Activated CD8-positive, alpha-beta T cell treated with anti-CD3 and anti-CD28 coated beads for 36 hours (primary cell): ENCODE measurements at regions of chr17 and their contacts with region 1.

Region 1: DNA sequence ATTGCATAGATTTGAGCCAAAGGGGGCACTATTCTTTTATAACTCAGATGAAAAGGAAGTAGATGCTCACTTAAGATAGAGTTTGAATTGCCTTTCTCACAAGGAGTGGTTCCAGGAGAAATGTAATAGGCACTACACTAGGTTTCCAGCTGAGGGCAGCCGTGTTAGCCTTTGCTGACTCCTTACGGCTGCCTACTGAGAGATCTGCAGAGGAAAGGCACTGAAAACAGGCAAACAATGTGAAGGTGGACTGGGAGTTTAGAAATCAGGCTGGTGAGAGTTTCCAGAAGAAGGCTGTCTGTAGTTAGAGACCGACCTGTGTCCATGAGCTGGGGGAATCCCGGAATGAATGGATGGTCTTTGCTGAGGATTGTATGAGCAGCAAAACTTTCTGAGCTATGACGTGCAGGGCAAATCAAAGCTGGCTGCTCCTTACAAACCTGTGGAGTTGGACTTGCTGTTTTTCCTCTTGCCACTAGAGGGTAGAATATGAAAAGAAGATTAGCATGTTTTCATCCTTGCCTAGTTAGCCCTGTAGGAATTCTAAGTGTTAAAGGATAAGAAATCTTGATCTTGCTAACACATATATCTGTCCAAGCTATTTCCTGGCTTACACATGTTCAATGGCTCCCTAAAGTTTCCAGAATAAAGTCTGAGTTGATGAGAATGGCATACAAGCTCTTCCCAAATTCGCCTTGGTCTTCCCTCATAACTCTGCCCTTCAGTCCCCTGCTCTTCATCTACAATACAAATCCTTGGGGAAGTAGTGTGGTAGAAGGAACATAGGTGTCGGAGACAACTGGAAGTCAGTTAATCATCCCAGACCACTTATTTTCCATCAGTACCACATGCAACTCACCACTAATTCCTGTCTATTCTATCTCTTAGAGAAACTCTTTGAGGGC is 20.1 kb upstream of the TAOK1 start:
- DNase-seq: peak; percentile 57
- ATAC-seq: peak; percentile 95
- H3K4me3 Mint-ChIP-seq: no peak overlapping the region
- H3K27ac Mint-ChIP-seq: no peak overlapping the region
- H3K4me1 Mint-ChIP-seq: no peaks in the 10 kb centered on the region
- H3K27me3 Mint-ChIP-seq: no peaks in the 10 kb centered on the region
- CTCF ChIP-seq: peak; percentile 82

Region 2: DNA sequence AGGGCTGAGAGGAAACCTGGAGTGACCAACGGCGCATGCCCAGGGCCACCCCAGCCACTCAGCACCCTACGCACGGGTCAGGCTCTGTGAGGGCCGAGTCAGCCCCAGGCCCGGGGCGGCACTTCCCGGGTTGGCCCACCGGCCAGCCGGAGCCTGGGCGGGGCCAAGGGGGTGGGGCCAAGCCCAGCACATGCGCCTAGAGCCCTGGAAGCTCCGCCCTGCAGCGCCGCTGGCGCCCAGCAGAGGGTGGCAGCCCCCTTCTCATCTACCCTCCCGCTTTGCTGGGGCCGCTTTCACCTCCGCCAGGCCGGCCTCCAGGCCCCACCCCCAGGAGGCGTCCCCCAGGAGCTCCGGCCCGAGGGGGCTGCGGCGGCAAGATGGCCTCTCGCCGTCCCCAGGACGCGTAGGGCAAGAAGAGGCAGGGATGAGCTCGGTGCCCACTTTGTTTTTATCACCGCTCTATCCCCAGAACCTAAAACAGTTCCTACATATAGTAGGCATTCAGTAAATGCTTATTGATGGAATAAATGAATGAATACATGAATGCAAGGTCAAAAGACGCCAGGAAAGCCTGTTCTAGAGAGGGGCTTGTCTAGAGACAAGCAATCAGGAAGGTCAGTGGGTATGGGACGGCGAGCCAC is 221.2 kb before region 1 on chr17:
- CTCF ChIA-PET with region 1: interaction called, 10 read pairs
- POLR2A ChIA-PET with region 1: no interaction called
- intact Hi-C with region 1: no loop called
- DNase-seq: peak; percentile 97
- ATAC-seq: peak; percentile 97
- H3K4me3 Mint-ChIP-seq: peak overlapping the region; percentile 72
- H3K27ac Mint-ChIP-seq: peak overlapping the region; percentile 87
- H3K4me1 Mint-ChIP-seq: peaks cover 54% of the 10 kb centered on the region
- H3K27me3 Mint-ChIP-seq: no peaks in the 10 kb centered on the region
- CTCF ChIP-seq: peak; percentile 93

Region 3: GRCh38 chr17:29384900-29385299 is 14.8 kb after region 1 on chr17:
- CTCF ChIA-PET with region 1: interaction called, 26 read pairs
- POLR2A ChIA-PET with region 1: interaction called, 4 read pairs
- intact Hi-C with region 1: no loop called
- DNase-seq: no peak
- ATAC-seq: no peak
- H3K4me3 Mint-ChIP-seq: no peak overlapping the region
- H3K27ac Mint-ChIP-seq: no peak overlapping the region
- H3K4me1 Mint-ChIP-seq: peaks cover 4% of the 10 kb centered on the region
- H3K27me3 Mint-ChIP-seq: no peaks in the 10 kb centered on the region
- CTCF ChIP-seq: no peak

Region 4: DNA sequence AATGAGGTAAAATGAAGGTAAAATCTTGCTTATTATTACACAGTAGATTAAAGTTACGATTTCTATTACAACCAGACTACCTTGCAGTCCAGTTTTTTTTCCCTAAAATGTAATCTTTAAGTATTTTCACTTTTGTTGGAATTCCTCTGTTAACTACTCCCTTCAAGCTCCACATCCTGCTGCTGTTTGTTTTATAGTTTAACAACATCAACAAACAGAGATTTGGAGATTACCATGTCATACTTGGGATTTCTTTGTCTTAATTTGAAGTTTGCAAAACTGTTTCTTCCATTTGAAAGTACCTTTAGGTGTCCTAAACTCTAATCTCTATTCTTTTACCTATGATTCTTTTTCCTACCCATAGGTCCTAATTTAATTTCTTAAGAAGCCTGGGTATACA is 113.4 kb after region 1 on chr17:
- CTCF ChIA-PET with region 1: interaction called, 14 read pairs
- POLR2A ChIA-PET with region 1: no interaction called
- intact Hi-C with region 1: no loop called
- DNase-seq: no peak
- ATAC-seq: no peak
- H3K4me3 Mint-ChIP-seq: no peak overlapping the region
- H3K27ac Mint-ChIP-seq: no peak overlapping the region
- H3K4me1 Mint-ChIP-seq: no peaks in the 10 kb centered on the region
- H3K27me3 Mint-ChIP-seq: no peaks in the 10 kb centered on the region
- CTCF ChIP-seq: no peak

Region 5: DNA sequence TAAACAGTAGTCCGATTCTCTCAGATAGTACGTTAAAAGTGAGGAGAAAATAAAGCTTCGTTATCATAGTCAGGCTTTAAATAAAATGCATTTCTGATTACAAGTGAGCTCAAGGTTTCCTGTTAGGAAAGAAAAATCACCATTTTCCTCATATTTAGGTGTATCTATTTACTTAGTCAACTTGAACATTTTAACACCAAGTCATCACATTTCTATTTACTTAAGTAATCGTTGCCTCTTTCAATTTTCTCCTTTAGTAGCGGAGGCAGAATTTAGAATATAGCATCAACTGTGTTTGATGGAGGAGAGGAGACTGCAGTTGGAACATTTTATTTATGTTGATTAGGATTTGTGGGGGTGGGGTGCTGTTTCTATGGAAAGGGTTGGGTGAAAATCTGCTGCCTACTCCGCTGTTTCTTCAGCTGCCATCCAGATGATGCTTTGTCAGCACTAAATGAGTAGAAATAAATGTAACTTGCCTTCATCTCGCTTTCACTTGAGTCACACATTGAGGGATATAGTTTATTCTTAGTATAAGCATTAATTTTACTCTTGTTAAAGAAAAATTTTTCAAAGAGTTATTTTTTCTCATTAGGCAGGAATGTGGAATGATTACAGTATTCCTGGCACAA is 154.5 kb after region 1 on chr17:
- CTCF ChIA-PET with region 1: interaction called, 12 read pairs
- POLR2A ChIA-PET with region 1: no interaction called
- intact Hi-C with region 1: no loop called
- DNase-seq: no peak
- ATAC-seq: no peak
- H3K4me3 Mint-ChIP-seq: no peak overlapping the region
- H3K27ac Mint-ChIP-seq: no peak overlapping the region
- H3K4me1 Mint-ChIP-seq: no peaks in the 10 kb centered on the region
- H3K27me3 Mint-ChIP-seq: no peaks in the 10 kb centered on the region
- CTCF ChIP-seq: no peak

Region 6: GRCh38 chr17:29557085-29557697 is 187.1 kb after region 1 on chr17:
- CTCF ChIA-PET with region 1: interaction called, 14 read pairs
- POLR2A ChIA-PET with region 1: interaction called, 3 read pairs
- intact Hi-C with region 1: no loop called
- DNase-seq: no peak
- ATAC-seq: peak; percentile 50
- H3K4me3 Mint-ChIP-seq: no peak overlapping the region
- H3K27ac Mint-ChIP-seq: no peak overlapping the region
- H3K4me1 Mint-ChIP-seq: peaks cover 21% of the 10 kb centered on the region
- H3K27me3 Mint-ChIP-seq: no peaks in the 10 kb centered on the region
- CTCF ChIP-seq: no peak

Region 7: GRCh38 chr17:29589524-29590410 is 219.7 kb after region 1 on chr17 and contains the start of gene GIT1:
- CTCF ChIA-PET with region 1: interaction called, 29 read pairs
- POLR2A ChIA-PET with region 1: no interaction called
- intact Hi-C with region 1: no loop called
- DNase-seq: peak; percentile 86
- ATAC-seq: peak; percentile 77
- H3K4me3 Mint-ChIP-seq: peak within 1 kb of the TSS; percentile 87
- H3K27ac Mint-ChIP-seq: peak within 1 kb of the TSS; percentile 93
- H3K4me1 Mint-ChIP-seq: peaks cover 67% of the 10 kb centered on the region
- H3K27me3 Mint-ChIP-seq: no peaks in the 10 kb centered on the region
- CTCF ChIP-seq: no peak
- total RNA-seq, gene GIT1: 54.8 to 59.3 TPM